ENCODE measurements at regions of chr4 and their contacts with region 1.

Region 1: GRCh38 chr4:35399912-35400311 is 844.4 kb downstream of the ARAP2 start:
- DNase-seq: no peak
- ATAC-seq: no peak
- H3K4me3 ChIP-seq: no peak overlapping the region
- H3K4me3 Mint-ChIP-seq: no peak overlapping the region
- H3K27ac ChIP-seq: no peak overlapping the region
- H3K27ac Mint-ChIP-seq: no peak overlapping the region
- H3K4me1 ChIP-seq: no peaks in the 10 kb centered on the region
- H3K4me1 Mint-ChIP-seq: no peaks in the 10 kb centered on the region
- H3K27me3 ChIP-seq: no peaks in the 10 kb centered on the region
- H3K27me3 Mint-ChIP-seq: no peaks in the 10 kb centered on the region
- CTCF ChIP-seq: no peak

Region 2: GRCh38 chr4:35315419-35315818 is 84.5 kb before region 1 on chr4:
- CTCF ChIA-PET with region 1: no interaction called
- POLR2A ChIA-PET with region 1: no interaction called
- intact Hi-C with region 1: no loop called
- DNase-seq: no peak
- ATAC-seq: no peak
- H3K4me3 ChIP-seq: no peak overlapping the region
- H3K4me3 Mint-ChIP-seq: no peak overlapping the region
- H3K27ac ChIP-seq: no peak overlapping the region
- H3K27ac Mint-ChIP-seq: no peak overlapping the region
- H3K4me1 ChIP-seq: no peaks in the 10 kb centered on the region
- H3K4me1 Mint-ChIP-seq: no peaks in the 10 kb centered on the region
- H3K27me3 ChIP-seq: no peaks in the 10 kb centered on the region
- H3K27me3 Mint-ChIP-seq: no peaks in the 10 kb centered on the region
- CTCF ChIP-seq: no peak

Region 3: GRCh38 chr4:35423104-35423503 is 23.2 kb after region 1 on chr4:
- CTCF ChIA-PET with region 1: no interaction called
- POLR2A ChIA-PET with region 1: no interaction called
- intact Hi-C with region 1: loop called in 1 of 2 experiments (anchors 1 kb)
- DNase-seq: no peak
- ATAC-seq: no peak
- H3K4me3 ChIP-seq: no peak overlapping the region
- H3K4me3 Mint-ChIP-seq: no peak overlapping the region
- H3K27ac ChIP-seq: no peak overlapping the region
- H3K27ac Mint-ChIP-seq: no peak overlapping the region
- H3K4me1 ChIP-seq: no peaks in the 10 kb centered on the region
- H3K4me1 Mint-ChIP-seq: no peaks in the 10 kb centered on the region
- H3K27me3 ChIP-seq: no peaks in the 10 kb centered on the region
- H3K27me3 Mint-ChIP-seq: no peaks in the 10 kb centered on the region
- CTCF ChIP-seq: no peak

Measured in CD8-positive, alpha-beta T cell (primary cell).